PC-9 (cell line): ENCODE measurements at regions of chr11 and their contacts with region 1.

Region 1: DNA sequence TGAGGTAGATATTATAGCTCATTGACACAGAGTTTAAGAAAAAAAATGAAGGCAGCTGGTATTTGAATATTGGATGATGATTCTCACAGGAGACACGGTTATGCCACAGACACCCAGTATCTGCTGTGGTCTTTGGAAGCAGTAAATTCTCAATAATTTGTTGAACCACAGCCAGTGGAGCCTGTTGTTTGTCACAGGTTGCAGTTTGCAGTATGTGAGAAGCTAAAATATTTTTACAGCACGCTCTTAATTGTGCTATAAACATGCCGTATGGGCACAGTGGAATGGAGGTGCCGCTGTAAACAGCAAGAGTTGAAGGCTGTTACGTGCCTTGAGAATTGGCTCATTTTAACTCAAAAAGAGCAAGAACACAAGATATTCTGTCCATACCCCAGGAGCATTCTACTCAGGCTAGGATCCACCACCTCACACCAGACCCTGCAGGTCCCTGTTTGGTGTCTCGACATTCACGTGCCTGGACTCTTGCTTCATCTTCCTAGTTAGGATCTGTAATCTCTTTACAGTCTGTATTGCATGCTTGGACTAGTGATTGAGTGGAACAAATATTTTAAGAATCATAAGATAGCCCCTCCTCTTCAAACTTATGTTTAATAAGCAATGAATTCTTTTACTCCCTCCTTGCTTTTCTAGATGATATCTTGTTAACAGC is 94.7 kb upstream of the GAL start:
- DNase-seq: no peak
- H3K4me3 ChIP-seq: no peak overlapping the region
- H3K27ac ChIP-seq: no peak overlapping the region
- H3K4me1 ChIP-seq: no peaks in the 10 kb centered on the region
- H3K27me3 ChIP-seq: no peaks in the 10 kb centered on the region
- CTCF ChIP-seq: no peak

Region 2: DNA sequence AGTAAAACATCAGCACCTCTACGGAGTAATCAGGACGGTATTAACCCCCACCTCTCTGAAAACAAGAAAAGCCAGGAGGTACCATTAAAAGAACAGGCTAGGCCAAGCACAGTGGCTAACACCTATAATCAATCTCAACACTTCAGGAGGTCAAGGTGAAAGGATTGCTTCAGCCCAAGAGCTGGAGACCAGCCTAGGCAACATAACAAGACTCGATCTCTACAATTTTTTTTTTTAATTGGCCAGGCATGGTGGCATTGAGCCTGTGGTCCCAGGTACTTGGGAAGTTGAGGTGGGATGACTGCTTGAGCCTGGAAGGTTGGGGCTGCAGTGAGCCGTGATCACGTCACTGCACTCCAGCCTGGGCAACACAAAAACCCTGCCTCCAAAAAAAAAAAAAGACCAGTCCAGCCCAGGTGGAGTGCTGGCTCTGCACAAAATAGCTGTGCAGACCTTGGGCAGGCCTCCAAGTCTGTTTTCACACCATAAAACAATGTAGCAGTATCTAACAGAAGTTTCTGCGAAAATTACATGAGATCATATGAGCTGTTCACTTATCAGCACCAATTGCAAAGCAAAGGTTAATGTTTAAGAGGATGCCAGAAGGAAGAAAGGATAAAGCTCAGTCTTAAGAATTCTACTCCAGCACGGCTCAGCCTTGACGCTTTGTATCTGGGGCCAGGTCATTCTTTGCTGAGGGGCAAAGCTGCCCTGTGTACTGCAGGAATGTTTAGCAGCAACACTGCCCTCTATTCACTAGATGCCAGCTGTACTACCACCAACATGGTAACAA is 483.3 kb before region 1 on chr11:
- CTCF ChIA-PET with region 1: no interaction called
- POLR2A ChIA-PET with region 1: no interaction called
- intact Hi-C with region 1: no loop called
- DNase-seq: no peak
- H3K4me3 ChIP-seq: no peak overlapping the region
- H3K27ac ChIP-seq: peak overlapping the region; percentile 29
- H3K4me1 ChIP-seq: peaks cover 7% of the 10 kb centered on the region; the same call in 1 of the 2 replicates
- H3K27me3 ChIP-seq: no peaks in the 10 kb centered on the region
- CTCF ChIP-seq: no peak

Region 3: GRCh38 chr11:68903288-68904247 is 313.9 kb after region 1 on chr11 and contains the starts of genes IGHMBP2 and MRPL21:
- CTCF ChIA-PET with region 1: no interaction called
- POLR2A ChIA-PET with region 1: interaction called, 12 read pairs
- intact Hi-C with region 1: no loop called
- DNase-seq: peak; percentile 70 to 86
- H3K4me3 ChIP-seq: peak within 1 kb of the TSS; percentile 99
- H3K27ac ChIP-seq: peak within 1 kb of the TSS; percentile 36
- H3K4me1 ChIP-seq: peaks cover 24% of the 10 kb centered on the region
- H3K27me3 ChIP-seq: no peaks in the 10 kb centered on the region
- CTCF ChIP-seq: no peak
- total RNA-seq, gene IGHMBP2: 27.0 and 27.6 TPM in 2 replicates
- total RNA-seq, gene MRPL21: 81.9 and 88.0 TPM in 2 replicates